ENCODE measurements at regions of chr2 and their contacts with region 1.

Region 1: DNA sequence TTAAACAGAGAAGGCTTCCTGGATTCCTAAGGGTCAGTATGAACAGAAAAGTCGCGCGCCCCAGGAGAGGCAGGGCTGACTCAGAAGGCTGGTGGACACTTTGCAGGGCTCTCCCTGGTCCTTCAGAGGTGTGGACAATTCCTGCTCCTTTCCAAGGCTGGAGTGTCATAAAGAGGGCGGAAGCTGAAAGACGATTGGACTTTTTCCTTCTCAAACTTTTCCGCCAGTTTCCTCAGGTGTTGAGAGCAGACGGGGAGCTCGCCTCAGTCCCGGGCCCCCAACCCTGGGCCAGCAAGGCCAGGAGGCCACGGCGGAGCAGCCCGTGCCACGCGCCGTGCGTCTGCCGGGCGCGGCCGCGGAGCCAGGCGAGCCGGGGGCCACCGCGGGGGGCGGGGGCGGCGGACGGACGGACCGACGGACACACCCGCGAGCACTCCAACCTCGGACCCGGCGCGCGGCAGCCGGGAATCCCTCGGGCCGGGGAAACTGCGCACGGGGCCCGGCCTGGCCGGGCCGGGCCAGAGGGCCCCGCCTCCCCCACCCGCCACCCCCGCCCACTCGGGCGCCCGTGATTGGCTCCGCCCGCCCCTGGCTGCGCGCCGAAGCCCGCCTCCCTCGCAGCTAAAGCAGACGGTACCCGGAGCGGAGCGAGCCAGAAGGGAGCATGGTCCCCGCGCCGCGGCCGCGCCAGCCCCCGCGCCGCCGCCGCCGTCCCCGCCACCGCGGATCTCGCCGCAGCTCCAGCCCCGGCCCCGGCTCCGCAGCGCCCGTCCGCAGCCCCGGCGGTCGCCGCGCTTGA is at the start of gene KLHL29:
- DNase-seq: peak; percentile 85
- H3K4me3 ChIP-seq: peak within 1 kb of the TSS; percentile 52 to 82 (median 62)
- H3K27ac ChIP-seq: peak within 1 kb of the TSS; percentile 81 to 88 (median 84)
- H3K4me1 ChIP-seq: peaks cover 0 to 33% (median 22%) of the 10 kb centered on the region in 4 donors
- H3K27me3 ChIP-seq: peaks cover 34% of the 10 kb centered on the region
- CTCF ChIP-seq: no peak
- EP300 ChIP-seq: no peak
- POLR2A ChIP-seq: no peak
- total RNA-seq, gene KLHL29: 3.3 to 16.5 (median 5.8) TPM

Region 2: GRCh38 chr2:23624378-23624777 is 239.6 kb after region 1 on chr2:
- in situ Hi-C with region 1: no loop called
- intact Hi-C with region 1: loop called (anchors 10 kb)
- DNase-seq: no peak
- H3K4me3 ChIP-seq: no peak overlapping the region
- H3K27ac ChIP-seq: peak overlapping the region in 1 of 4 donors; percentile 93
- H3K4me1 ChIP-seq: peaks cover 0 to 23% (median 11%) of the 10 kb centered on the region in 4 donors
- H3K27me3 ChIP-seq: no peaks in the 10 kb centered on the region
- CTCF ChIP-seq: peak in 2 of 5 experiments; percentile 15 to 28
- EP300 ChIP-seq: no peak
- POLR2A ChIP-seq: no peak